ENCODE measurements at regions of chr5 and their contacts with region 1.

Region 1: GRCh38 chr5:118987988-118988865 is at the start of gene DTWD2:
- DNase-seq: peak; percentile 94 to 95
- ATAC-seq: peak; percentile 99
- H3K4me3 ChIP-seq: peak within 1 kb of the TSS; percentile 54
- H3K27ac ChIP-seq: peak within 1 kb of the TSS; percentile 94 to 98
- H3K4me1 ChIP-seq: peaks cover 16% of the 10 kb centered on the region; the same call in 2 of the 3 replicates
- CTCF ChIP-seq: peak; percentile 98
- EP300 ChIP-seq: no peak
- POLR2A ChIP-seq: peak; percentile 84
- RAD21 ChIP-seq: peak; percentile 78 to 95
- polyA plus RNA-seq, gene DTWD2: 4.1 and 4.8 TPM in 2 replicates

Region 2: GRCh38 chr5:118919016-118919415 is 69.2 kb before region 1 on chr5:
- CTCF ChIA-PET with region 1: no interaction called
- POLR2A ChIA-PET with region 1: no interaction called
- DNase-seq: no peak
- ATAC-seq: no peak
- H3K4me3 ChIP-seq: no peak overlapping the region
- H3K27ac ChIP-seq: no peak overlapping the region
- H3K4me1 ChIP-seq: no peaks in the 10 kb centered on the region
- CTCF ChIP-seq: no peak
- EP300 ChIP-seq: no peak
- POLR2A ChIP-seq: no peak
- RAD21 ChIP-seq: no peak

Region 3: DNA sequence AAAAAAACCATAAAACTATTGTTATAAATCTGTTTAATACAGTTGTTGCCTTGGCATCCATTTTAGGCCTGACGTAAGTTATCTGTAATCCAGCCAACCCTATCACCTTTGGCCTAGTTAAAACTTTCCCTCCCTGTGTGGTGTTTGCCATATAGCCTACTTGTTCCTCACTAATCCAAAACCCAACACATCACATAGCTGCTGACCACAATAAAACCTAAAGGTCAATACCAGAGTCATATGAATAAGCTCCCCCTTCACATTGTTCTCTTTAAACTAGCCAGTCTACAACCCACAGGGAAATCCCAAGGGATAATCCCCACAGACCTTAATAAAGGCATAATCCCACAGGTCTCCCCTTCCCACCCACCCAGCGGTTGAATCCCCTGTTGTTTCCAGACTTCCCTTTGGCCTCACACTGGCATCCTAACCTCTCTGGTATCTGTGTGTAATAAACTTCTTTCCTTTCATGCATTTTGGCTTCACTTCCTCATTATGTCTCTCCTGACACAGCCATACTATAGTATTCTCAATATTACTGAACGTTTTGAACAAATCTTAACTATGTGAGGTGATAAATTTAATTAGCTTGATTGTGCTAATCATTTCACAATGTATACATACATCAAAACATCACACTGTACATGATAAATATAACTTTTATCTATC is 50.7 kb before region 1 on chr5:
- CTCF ChIA-PET with region 1: no interaction called
- POLR2A ChIA-PET with region 1: no interaction called
- DNase-seq: no peak
- ATAC-seq: no peak
- H3K4me3 ChIP-seq: no peak overlapping the region
- H3K27ac ChIP-seq: no peak overlapping the region
- H3K4me1 ChIP-seq: no peaks in the 10 kb centered on the region
- CTCF ChIP-seq: no peak
- EP300 ChIP-seq: no peak
- POLR2A ChIP-seq: no peak
- RAD21 ChIP-seq: no peak

Region 4: GRCh38 chr5:119009131-119009530 is 20.9 kb after region 1 on chr5:
- CTCF ChIA-PET with region 1: interaction called, 19 read pairs
- POLR2A ChIA-PET with region 1: interaction called, 3 read pairs
- DNase-seq: peak; percentile 13 to 41
- ATAC-seq: peak in 1 of 2 experiments; percentile 68; a peak in 2 of 6 replicates
- H3K4me3 ChIP-seq: no peak overlapping the region
- H3K27ac ChIP-seq: no peak overlapping the region
- H3K4me1 ChIP-seq: peaks cover 11% of the 10 kb centered on the region; the same call in 1 of the 3 replicates
- CTCF ChIP-seq: no peak
- EP300 ChIP-seq: no peak
- POLR2A ChIP-seq: no peak
- RAD21 ChIP-seq: no peak

Region 5: GRCh38 chr5:119022017-119022745 is 34.0 kb after region 1 on chr5:
- CTCF ChIA-PET with region 1: interaction called, 27 read pairs
- POLR2A ChIA-PET with region 1: interaction called, 3 read pairs
- DNase-seq: peak; percentile 18 to 55
- ATAC-seq: peak; percentile 84 to 90
- H3K4me3 ChIP-seq: no peak overlapping the region
- H3K27ac ChIP-seq: no peak overlapping the region
- H3K4me1 ChIP-seq: peaks cover 14% of the 10 kb centered on the region
- CTCF ChIP-seq: peak; percentile 71
- EP300 ChIP-seq: no peak
- POLR2A ChIP-seq: no peak
- RAD21 ChIP-seq: peak; percentile 83 to 85

Region 6: GRCh38 chr5:119332978-119333401 is 344.8 kb after region 1 on chr5:
- CTCF ChIA-PET with region 1: interaction called, 29 read pairs
- POLR2A ChIA-PET with region 1: interaction called, 4 read pairs
- DNase-seq: no peak
- ATAC-seq: no peak
- H3K4me3 ChIP-seq: no peak overlapping the region
- H3K27ac ChIP-seq: peak overlapping the region in 1 of 2 experiments; percentile 18; a peak in 1 of 6 replicates
- H3K4me1 ChIP-seq: peaks cover 45% of the 10 kb centered on the region
- CTCF ChIP-seq: no peak
- EP300 ChIP-seq: no peak
- POLR2A ChIP-seq: no peak
- RAD21 ChIP-seq: no peak

Region 7: GRCh38 chr5:119418531-119419116 is 430.4 kb after region 1 on chr5:
- CTCF ChIA-PET with region 1: interaction called, 173 read pairs
- POLR2A ChIA-PET with region 1: no interaction called
- DNase-seq: no peak
- ATAC-seq: no peak
- H3K4me3 ChIP-seq: no peak overlapping the region
- H3K27ac ChIP-seq: no peak overlapping the region
- H3K4me1 ChIP-seq: no peaks in the 10 kb centered on the region
- CTCF ChIP-seq: no peak
- EP300 ChIP-seq: no peak
- POLR2A ChIP-seq: no peak
- RAD21 ChIP-seq: no peak

Region 8: GRCh38 chr5:119435436-119436132 is 447.4 kb after region 1 on chr5:
- CTCF ChIA-PET with region 1: interaction called, 19 read pairs
- POLR2A ChIA-PET with region 1: interaction called, 3 read pairs
- DNase-seq: peak; percentile 33 to 72
- ATAC-seq: peak; percentile 87 to 89
- H3K4me3 ChIP-seq: no peak overlapping the region
- H3K27ac ChIP-seq: no peak overlapping the region
- H3K4me1 ChIP-seq: no peaks in the 10 kb centered on the region; the same call in 2 of the 3 replicates
- CTCF ChIP-seq: peak; percentile 57
- EP300 ChIP-seq: no peak
- POLR2A ChIP-seq: no peak
- RAD21 ChIP-seq: peak; percentile 59 to 64

Measured in A549 (cell line).